ENCODE measurements at regions of chr12 and their contacts with region 1.

Region 1: DNA sequence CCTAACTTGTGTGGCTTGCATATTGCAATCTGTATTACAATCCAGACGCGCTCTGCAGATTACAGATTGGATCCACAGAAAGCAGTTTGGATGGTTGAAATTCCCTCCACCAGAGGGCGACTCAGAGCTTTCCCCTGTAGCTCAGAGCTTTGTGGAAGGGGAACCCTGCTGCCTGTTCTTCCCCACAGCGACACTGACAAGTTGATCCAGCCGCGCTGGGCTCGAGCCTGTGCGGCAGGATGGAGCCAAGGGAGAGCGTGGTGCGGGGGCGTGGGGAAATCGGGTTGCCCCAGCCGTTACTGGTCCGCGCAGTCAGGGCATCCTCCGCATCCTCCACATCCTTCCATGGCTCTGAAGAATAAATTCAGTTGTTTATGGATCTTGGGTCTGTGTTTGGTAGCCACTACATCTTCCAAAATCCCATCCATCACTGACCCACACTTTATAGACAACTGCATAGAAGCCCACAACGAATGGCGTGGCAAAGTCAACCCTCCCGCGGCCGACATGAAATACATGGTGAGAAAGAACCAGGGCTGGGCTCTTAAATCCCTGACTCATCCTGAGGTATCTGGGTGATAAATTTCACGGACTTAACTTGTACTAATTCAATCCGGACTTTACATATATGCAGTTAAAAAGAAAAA is at the start of gene GLIPR1L1:
- DNase-seq: peak; percentile 88
- H3K4me3 ChIP-seq: peak within 1 kb of the TSS; percentile 20 to 58 (median 56)
- H3K27ac ChIP-seq: no peak within 1 kb of the TSS
- H3K4me1 ChIP-seq: peaks cover 10% of the 10 kb centered on the region
- H3K27me3 ChIP-seq: peaks cover 2 to 13% of the 10 kb centered on the region in 2 experiments
- CTCF ChIP-seq: peak; percentile 85 to 91
- POLR2A ChIP-seq: no peak
- total RNA-seq, gene GLIPR1L1: not detected in 2 replicates

Region 2: GRCh38 chr12:75505706-75506312 is 171.3 kb after region 1 on chr12:
- CTCF ChIA-PET with region 1: interaction called, 13 read pairs
- POLR2A ChIA-PET with region 1: no interaction called
- dilution Hi-C with region 1: no loop called
- intact Hi-C with region 1: loop called (anchors 1 kb)
- DNase-seq: peak; percentile 60
- H3K4me3 ChIP-seq: no peak overlapping the region
- H3K27ac ChIP-seq: no peak overlapping the region
- H3K4me1 ChIP-seq: peaks cover 8% of the 10 kb centered on the region
- H3K27me3 ChIP-seq: no peaks in the 10 kb centered on the region
- CTCF ChIP-seq: peak; percentile 32 to 50
- POLR2A ChIP-seq: peak; percentile 38

Measured in endothelial cell of umbilical vein (primary cell).